B cell (primary cell): ENCODE measurements at regions of chr2 and their contacts with region 1.

Region 1: DNA sequence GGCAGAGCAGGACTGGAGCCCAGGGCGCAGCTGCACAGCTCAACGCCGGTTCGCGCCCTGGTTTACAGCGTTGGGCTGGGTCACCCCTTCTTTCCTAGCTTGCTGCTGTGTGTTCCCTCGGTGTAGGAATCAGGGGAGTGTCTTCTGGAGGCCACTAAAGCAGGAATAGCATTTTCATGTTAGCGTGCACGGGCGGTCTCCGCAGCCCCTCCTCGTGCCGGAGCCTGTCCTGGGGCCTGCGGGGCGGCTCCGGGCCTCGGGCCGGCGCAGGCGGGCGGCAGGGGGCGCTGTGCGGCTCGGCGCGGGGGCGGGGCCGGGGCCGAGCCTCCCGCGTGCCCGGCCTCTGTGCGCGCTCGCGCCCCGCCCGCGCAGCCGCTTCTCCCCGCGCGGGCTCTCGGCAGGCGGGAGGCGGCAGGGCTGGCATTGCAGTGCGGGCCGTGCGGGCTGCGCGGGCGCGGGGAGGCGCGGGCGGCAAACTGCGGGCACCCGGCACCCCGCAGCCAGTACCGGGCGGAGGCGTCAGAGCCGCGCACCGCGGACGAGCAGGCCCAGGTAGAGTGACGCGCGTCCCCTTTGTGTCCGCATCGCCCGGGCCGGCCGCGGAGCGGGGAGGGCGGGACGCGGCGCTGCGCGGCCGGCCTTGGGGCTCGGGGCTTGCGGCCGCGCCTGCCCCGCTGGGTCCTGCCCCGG is at the start of gene RNF144A:
- DNase-seq: peak; percentile 77
- ATAC-seq: peak; percentile 94
- H3K4me3 ChIP-seq: peak within 1 kb of the TSS in 4 of 5 experiments; percentile 25 to 57 (median 48)
- H3K4me3 Mint-ChIP-seq: peak within 1 kb of the TSS; percentile 78
- H3K27ac ChIP-seq: no peak within 1 kb of the TSS
- H3K27ac Mint-ChIP-seq: peak within 1 kb of the TSS; percentile 10
- H3K4me1 ChIP-seq: peaks cover 7 to 13% of the 10 kb centered on the region in 2 donors
- H3K4me1 Mint-ChIP-seq: peaks cover 5% of the 10 kb centered on the region
- H3K27me3 ChIP-seq: peaks cover 0 to 17% (median 4%) of the 10 kb centered on the region in 4 experiments
- H3K27me3 Mint-ChIP-seq: peaks cover 8% of the 10 kb centered on the region
- CTCF ChIP-seq: peak; percentile 52
- total RNA-seq, gene RNF144A: 1.6 and 2.5 TPM in 2 replicates

Region 2: DNA sequence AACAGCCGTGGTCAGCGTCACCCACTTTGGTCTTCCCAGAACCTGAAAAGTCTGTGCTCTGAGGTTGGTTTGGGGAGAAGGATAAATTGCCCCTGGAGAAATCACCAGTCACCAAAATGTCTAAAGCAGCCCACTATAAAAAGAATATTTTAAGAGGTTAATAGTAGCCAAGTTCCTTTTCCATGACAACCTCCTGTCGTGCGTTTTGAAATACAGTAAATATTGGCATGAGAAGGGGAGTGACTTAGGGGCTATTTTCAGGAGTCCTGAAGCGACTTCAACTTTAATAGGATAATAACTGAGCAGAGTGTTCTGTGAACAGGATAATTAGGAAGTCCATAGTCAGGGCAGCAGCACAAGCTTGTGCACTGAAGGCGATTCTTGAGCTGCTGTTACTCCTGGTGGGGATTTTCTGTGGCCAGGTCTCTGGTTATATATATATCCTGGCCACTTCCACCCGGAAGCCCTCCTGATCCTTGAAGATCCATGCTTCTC is 49.3 kb after region 1 on chr2:
- CTCF ChIA-PET with region 1: no interaction called
- POLR2A ChIA-PET with region 1: no interaction called
- intact Hi-C with region 1: no loop called
- DNase-seq: no peak
- ATAC-seq: no peak
- H3K4me3 ChIP-seq: no peak overlapping the region
- H3K4me3 Mint-ChIP-seq: no peak overlapping the region
- H3K27ac ChIP-seq: no peak overlapping the region
- H3K27ac Mint-ChIP-seq: no peak overlapping the region
- H3K4me1 ChIP-seq: no peaks in the 10 kb centered on the region
- H3K4me1 Mint-ChIP-seq: no peaks in the 10 kb centered on the region
- H3K27me3 ChIP-seq: no peaks in the 10 kb centered on the region
- H3K27me3 Mint-ChIP-seq: no peaks in the 10 kb centered on the region
- CTCF ChIP-seq: no peak

Region 3: GRCh38 chr2:7004636-7005035 is 87.4 kb after region 1 on chr2:
- CTCF ChIA-PET with region 1: interaction called, 5 read pairs
- POLR2A ChIA-PET with region 1: interaction called, 3 read pairs
- intact Hi-C with region 1: loop called (anchors 5 kb)
- DNase-seq: peak; percentile 47
- ATAC-seq: peak; percentile 51
- H3K4me3 ChIP-seq: no peak overlapping the region
- H3K4me3 Mint-ChIP-seq: peak overlapping the region; percentile 37
- H3K27ac ChIP-seq: no peak overlapping the region
- H3K27ac Mint-ChIP-seq: peak overlapping the region; percentile 11
- H3K4me1 ChIP-seq: peaks cover 49 to 58% of the 10 kb centered on the region in 2 donors
- H3K4me1 Mint-ChIP-seq: peaks cover 52% of the 10 kb centered on the region
- H3K27me3 ChIP-seq: no peaks in the 10 kb centered on the region
- H3K27me3 Mint-ChIP-seq: peaks cover 19% of the 10 kb centered on the region
- CTCF ChIP-seq: no peak

Region 4: GRCh38 chr2:7165736-7166135 is 248.5 kb after region 1 on chr2:
- CTCF ChIA-PET with region 1: no interaction called
- POLR2A ChIA-PET with region 1: no interaction called
- intact Hi-C with region 1: no loop called
- DNase-seq: no peak
- ATAC-seq: no peak
- H3K4me3 ChIP-seq: no peak overlapping the region
- H3K4me3 Mint-ChIP-seq: no peak overlapping the region
- H3K27ac ChIP-seq: no peak overlapping the region
- H3K27ac Mint-ChIP-seq: no peak overlapping the region
- H3K4me1 ChIP-seq: no peaks in the 10 kb centered on the region
- H3K4me1 Mint-ChIP-seq: no peaks in the 10 kb centered on the region
- H3K27me3 ChIP-seq: no peaks in the 10 kb centered on the region
- H3K27me3 Mint-ChIP-seq: peaks cover 16% of the 10 kb centered on the region
- CTCF ChIP-seq: no peak